ENCODE measurements at regions of chr3 and their contacts with region 1.

Region 1: DNA sequence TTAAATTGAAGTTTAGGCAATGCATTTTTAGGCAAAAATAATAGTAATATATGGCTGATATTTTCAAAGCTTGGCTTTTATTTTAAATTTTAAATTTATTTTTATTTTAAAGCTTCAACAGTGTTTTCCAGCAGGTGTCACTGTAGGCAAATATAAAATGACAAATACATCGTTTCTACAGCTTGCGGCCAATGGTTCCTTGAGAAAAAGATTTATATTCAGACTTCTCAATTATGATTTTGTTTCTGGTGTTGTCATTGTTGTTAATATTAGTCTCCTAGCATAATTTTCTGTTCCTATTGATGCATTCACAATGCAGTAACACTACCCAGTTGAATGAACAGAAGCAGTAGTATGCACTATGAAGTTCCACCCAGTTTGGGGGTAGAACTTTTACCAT is 220.7 kb upstream of the DNAJC19 start:
- DNase-seq: no peak
- H3K4me3 ChIP-seq: no peak overlapping the region
- H3K27ac ChIP-seq: no peak overlapping the region
- H3K4me1 ChIP-seq: no peaks in the 10 kb centered on the region
- H3K27me3 ChIP-seq: no peaks in the 10 kb centered on the region
- CTCF ChIP-seq: no peak
- EP300 ChIP-seq: no peak
- POLR2A ChIP-seq: no peak

Region 2: GRCh38 chr3:181773921-181774320 is 563.6 kb after region 1 on chr3:
- in situ Hi-C with region 1: no loop called
- intact Hi-C with region 1: loop called (anchors 5 kb)
- DNase-seq: no peak
- H3K4me3 ChIP-seq: no peak overlapping the region
- H3K27ac ChIP-seq: no peak overlapping the region
- H3K4me1 ChIP-seq: no peaks in the 10 kb centered on the region
- H3K27me3 ChIP-seq: no peaks in the 10 kb centered on the region
- CTCF ChIP-seq: no peak
- EP300 ChIP-seq: no peak
- POLR2A ChIP-seq: no peak

Region 3: DNA sequence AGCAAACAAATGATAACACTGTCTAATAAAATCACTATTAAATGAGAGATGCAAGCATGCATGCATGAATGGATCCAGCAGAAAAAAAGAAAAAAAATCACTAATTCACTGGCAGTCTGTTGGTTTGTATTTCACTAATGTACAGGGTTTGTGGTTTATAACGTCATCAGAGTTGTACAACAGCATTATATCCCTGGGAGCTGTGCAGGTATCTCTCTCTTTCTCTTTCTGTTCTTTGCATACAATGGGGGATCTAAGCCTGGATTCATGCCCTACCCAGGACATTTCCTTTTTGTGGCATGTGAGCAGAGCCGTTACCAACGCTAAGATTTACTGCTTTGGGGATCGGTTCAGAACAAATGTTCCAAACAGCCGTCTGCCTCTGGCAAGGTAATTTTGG is 731.0 kb after region 1 on chr3:
- in situ Hi-C with region 1: no loop called
- intact Hi-C with region 1: no loop called
- DNase-seq: no peak
- H3K4me3 ChIP-seq: no peak overlapping the region
- H3K27ac ChIP-seq: no peak overlapping the region
- H3K4me1 ChIP-seq: no peaks in the 10 kb centered on the region
- H3K27me3 ChIP-seq: no peaks in the 10 kb centered on the region
- CTCF ChIP-seq: no peak
- EP300 ChIP-seq: no peak
- POLR2A ChIP-seq: no peak

Region 4: DNA sequence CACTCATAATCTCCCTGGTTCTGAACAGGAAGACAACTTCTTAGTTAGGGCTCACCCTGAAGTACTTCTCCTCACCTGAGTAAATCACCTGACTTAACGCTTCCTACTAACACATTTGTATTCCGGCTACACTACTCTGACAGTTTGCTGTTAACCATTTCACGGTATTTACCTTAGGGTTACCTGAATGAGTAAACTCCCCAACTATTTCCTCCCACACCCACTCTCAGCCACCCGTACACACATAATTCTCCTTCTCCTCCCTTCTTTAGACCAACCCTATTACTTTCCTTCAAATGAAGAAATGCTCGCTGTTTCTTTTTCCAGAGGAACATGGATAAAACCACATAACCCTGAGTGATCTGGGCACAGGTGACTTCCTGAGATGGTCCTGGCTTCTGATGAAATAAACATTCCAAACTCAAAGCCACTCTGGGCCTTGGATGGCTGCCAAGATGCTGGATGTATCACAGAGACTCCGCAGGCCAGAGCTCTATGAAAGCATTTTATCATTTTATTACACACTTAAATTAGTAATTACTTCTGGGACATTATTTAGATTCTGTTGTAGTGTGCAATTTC is 1399.4 kb after region 1 on chr3:
- in situ Hi-C with region 1: no loop called
- intact Hi-C with region 1: loop called (anchors 5 kb)
- DNase-seq: peak; percentile 78
- H3K4me3 ChIP-seq: no peak overlapping the region
- H3K27ac ChIP-seq: peak overlapping the region; percentile 55 to 78 (median 76)
- H3K4me1 ChIP-seq: peaks cover 0 to 43% (median 22%) of the 10 kb centered on the region in 4 donors
- H3K27me3 ChIP-seq: no peaks in the 10 kb centered on the region
- CTCF ChIP-seq: peak in 1 of 5 experiments; percentile 36
- EP300 ChIP-seq: peak; percentile 67
- POLR2A ChIP-seq: no peak